MCF 10A (cell line): ENCODE measurements at regions of chr2 and their contacts with region 1.

Region 1: DNA sequence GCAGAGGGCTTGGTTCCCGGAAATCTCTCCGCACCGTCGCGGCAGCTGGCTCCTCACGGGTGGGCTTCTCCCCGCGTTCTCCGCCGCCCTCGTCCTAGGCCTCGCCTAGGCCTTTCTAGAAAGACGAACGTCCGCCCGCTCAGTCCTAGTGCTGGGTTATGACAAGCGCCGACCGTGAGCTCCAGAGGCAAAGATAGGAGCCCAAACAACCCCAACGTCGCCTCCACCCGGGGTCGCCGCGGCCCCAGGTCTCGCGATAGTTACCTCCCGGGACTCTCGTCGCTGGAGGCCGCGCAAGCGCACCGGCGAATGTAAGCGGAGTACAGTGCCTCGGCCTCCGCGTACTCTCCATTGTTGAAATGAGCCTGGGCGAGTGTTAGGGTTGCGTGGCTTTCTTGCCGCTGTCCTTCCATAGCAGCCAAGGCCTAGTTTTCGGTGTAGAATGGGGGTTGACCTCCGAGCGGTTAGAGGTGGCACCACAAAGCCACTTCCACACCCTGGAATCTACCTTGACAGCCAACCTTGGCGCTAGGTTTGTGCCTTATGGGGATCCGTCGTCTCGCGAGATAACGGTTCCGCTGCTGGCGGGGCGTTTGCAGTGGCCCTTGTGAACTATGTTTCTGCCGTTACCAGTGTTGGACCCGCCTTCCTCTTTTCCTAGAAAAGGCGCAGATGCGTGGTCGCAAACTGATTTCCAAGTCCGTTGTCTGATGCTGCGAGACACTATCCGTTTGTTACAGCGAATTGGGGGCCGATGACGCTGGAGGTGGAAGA is at the start of gene TTC32:
- DNase-seq: peak; percentile 95
- H3K4me3 Mint-ChIP-seq: peak within 1 kb of the TSS; percentile 87
- H3K27ac Mint-ChIP-seq: peak within 1 kb of the TSS; percentile 99
- H3K4me1 Mint-ChIP-seq: peaks cover 30% of the 10 kb centered on the region
- H3K27me3 Mint-ChIP-seq: no peaks in the 10 kb centered on the region
- CTCF ChIP-seq: no peak
- total RNA-seq, gene TTC32: 14.1 and 18.2 TPM in 2 replicates

Region 2: DNA sequence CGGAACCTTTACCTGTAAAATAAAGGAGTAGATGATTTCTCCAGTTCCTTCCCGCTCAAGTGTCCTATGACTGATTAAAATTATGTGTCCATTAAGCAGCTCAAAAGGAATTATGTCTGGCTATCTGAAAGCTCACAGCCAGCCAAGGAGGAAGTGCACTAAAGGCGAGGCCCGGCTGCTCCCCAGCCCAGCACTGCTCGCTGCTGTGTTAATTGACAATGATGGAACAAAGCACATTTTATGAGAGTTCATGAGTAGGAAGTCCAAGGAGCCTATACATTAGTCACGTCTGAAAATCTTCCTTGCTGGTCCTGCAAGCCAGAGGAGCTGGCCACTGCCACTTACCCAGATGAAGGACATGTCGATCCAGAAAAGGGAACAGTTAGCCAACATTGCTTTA is 14.1 kb before region 1 on chr2:
- CTCF ChIA-PET with region 1: interaction called, 4 read pairs
- POLR2A ChIA-PET with region 1: interaction called, 10 read pairs
- intact Hi-C with region 1: no loop called
- DNase-seq: no peak
- H3K4me3 Mint-ChIP-seq: no peak overlapping the region
- H3K27ac Mint-ChIP-seq: no peak overlapping the region
- H3K4me1 Mint-ChIP-seq: peaks cover 14% of the 10 kb centered on the region
- H3K27me3 Mint-ChIP-seq: no peaks in the 10 kb centered on the region
- CTCF ChIP-seq: no peak

Region 3: GRCh38 chr2:19911799-19912509 is 10.3 kb after region 1 on chr2:
- CTCF ChIA-PET with region 1: no interaction called
- POLR2A ChIA-PET with region 1: interaction called, 53 read pairs
- intact Hi-C with region 1: no loop called
- DNase-seq: peak; percentile 98
- H3K4me3 Mint-ChIP-seq: peak overlapping the region; percentile 29
- H3K27ac Mint-ChIP-seq: peak overlapping the region; percentile 83
- H3K4me1 Mint-ChIP-seq: peaks cover 25% of the 10 kb centered on the region
- H3K27me3 Mint-ChIP-seq: no peaks in the 10 kb centered on the region
- CTCF ChIP-seq: no peak

Region 4: GRCh38 chr2:19989681-19990415 is 88.2 kb after region 1 on chr2 and contains the start of gene WDR35:
- CTCF ChIA-PET with region 1: no interaction called
- POLR2A ChIA-PET with region 1: interaction called, 6 read pairs
- intact Hi-C with region 1: loop called (anchors 5 kb)
- DNase-seq: peak; percentile 90
- H3K4me3 Mint-ChIP-seq: peak within 1 kb of the TSS; percentile 95
- H3K27ac Mint-ChIP-seq: peak within 1 kb of the TSS; percentile 77
- H3K4me1 Mint-ChIP-seq: peaks cover 26% of the 10 kb centered on the region
- H3K27me3 Mint-ChIP-seq: no peaks in the 10 kb centered on the region
- CTCF ChIP-seq: no peak
- total RNA-seq, gene WDR35: 13.2 and 17.5 TPM in 2 replicates